Naive thymus-derived CD4-positive, alpha-beta T cell (primary cell): ENCODE measurements at regions of chr6 and their contacts with region 1.

Region 1: GRCh38 chr6:52984247-52984646 is 10.8 kb downstream of the GSTA4 start:
- DNase-seq: peak in 8 of 9 donors; percentile 53 to 77 (median 70)
- ATAC-seq: peak; percentile 93
- H3K4me3 ChIP-seq: peak overlapping the region; percentile 17
- H3K4me3 Mint-ChIP-seq: peak overlapping the region; percentile 30 to 82 (median 75)
- H3K27ac ChIP-seq: no peak overlapping the region
- H3K27ac Mint-ChIP-seq: peak overlapping the region in 7 of 9 donors; percentile 9 to 67 (median 29)
- H3K4me1 ChIP-seq: peaks cover 22 to 35% of the 10 kb centered on the region in 2 donors
- H3K4me1 Mint-ChIP-seq: peaks cover 20 to 53% (median 35%) of the 10 kb centered on the region in 7 donors
- H3K27me3 ChIP-seq: no peaks in the 10 kb centered on the region
- H3K27me3 Mint-ChIP-seq: peaks cover 4 to 34% (median 23%) of the 10 kb centered on the region in 5 donors

Region 2: GRCh38 chr6:52881996-52882841 is 102.0 kb before region 1 on chr6:
- CTCF ChIA-PET with region 1: no interaction called
- POLR2A ChIA-PET with region 1: no interaction called
- intact Hi-C with region 1: loop called in 1 of 2 experiments (anchors 2 kb)
- DNase-seq: peak; percentile 29 to 74 (median 61)
- ATAC-seq: peak; percentile 99
- H3K4me3 ChIP-seq: peak overlapping the region; percentile 57
- H3K4me3 Mint-ChIP-seq: peak overlapping the region; percentile 85 to 92 (median 88)
- H3K27ac ChIP-seq: no peak overlapping the region
- H3K27ac Mint-ChIP-seq: peak overlapping the region in 8 of 9 donors; percentile 7 to 86 (median 58)
- H3K4me1 ChIP-seq: no peaks in the 10 kb centered on the region
- H3K4me1 Mint-ChIP-seq: peaks cover 0 to 13% (median 0%) of the 10 kb centered on the region in 7 donors
- H3K27me3 ChIP-seq: no peaks in the 10 kb centered on the region
- H3K27me3 Mint-ChIP-seq: no peaks in the 10 kb centered on the region